Tibial artery (tissue), 4 donors: ENCODE measurements at regions of chr7 and their contacts with region 1.

Region 1: GRCh38 chr7:135558337-135558767 is 635 bp downstream of the NUP205 start:
- DNase-seq: peak; percentile 63 to 73
- H3K4me3 ChIP-seq: peak overlapping the region; percentile 59 to 64
- H3K27ac ChIP-seq: peak overlapping the region; percentile 81 to 86
- H3K4me1 ChIP-seq: peaks cover 0 to 16% (median 6%) of the 10 kb centered on the region in 4 donors
- H3K27me3 ChIP-seq: no peaks in the 10 kb centered on the region
- CTCF ChIP-seq: peak; percentile 41 to 52

Region 2: DNA sequence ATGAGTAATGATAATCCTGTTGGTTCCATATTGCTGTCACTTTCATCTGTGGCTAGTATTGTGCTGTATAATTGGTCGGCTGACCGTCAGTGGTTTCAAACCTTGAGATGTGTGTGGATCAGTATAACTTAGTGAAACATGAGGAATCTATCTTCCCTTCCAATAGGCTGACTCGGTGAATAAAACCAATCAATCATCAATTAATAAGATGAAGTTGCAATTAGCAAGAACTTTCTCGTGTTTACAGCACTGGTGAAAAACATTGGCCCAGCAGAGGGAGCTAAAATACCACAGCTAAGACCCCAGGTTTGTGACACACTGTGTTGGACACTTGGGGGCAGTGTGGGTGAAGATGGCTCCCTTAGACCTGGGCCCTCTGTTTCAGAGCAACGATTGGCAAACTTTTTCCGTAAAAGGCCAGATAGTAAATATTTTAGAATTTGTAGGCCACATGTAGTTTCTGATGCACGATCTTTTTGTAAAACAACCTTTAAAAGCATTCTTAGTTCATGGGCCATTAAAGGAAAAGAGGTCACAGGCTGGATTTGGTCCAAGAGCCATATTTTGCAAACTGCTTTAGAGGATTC is 276.9 kb before region 1 on chr7:
- intact Hi-C with region 1: loop called (anchors 2 kb)
- DNase-seq: peak; percentile 83 to 88
- H3K4me3 ChIP-seq: no peak overlapping the region
- H3K27ac ChIP-seq: no peak overlapping the region
- H3K4me1 ChIP-seq: peaks cover 0 to 9% (median 2%) of the 10 kb centered on the region in 4 donors
- H3K27me3 ChIP-seq: peaks cover 0 to 2% of the 10 kb centered on the region in 2 donors
- CTCF ChIP-seq: peak; percentile 89 to 94

Region 3: DNA sequence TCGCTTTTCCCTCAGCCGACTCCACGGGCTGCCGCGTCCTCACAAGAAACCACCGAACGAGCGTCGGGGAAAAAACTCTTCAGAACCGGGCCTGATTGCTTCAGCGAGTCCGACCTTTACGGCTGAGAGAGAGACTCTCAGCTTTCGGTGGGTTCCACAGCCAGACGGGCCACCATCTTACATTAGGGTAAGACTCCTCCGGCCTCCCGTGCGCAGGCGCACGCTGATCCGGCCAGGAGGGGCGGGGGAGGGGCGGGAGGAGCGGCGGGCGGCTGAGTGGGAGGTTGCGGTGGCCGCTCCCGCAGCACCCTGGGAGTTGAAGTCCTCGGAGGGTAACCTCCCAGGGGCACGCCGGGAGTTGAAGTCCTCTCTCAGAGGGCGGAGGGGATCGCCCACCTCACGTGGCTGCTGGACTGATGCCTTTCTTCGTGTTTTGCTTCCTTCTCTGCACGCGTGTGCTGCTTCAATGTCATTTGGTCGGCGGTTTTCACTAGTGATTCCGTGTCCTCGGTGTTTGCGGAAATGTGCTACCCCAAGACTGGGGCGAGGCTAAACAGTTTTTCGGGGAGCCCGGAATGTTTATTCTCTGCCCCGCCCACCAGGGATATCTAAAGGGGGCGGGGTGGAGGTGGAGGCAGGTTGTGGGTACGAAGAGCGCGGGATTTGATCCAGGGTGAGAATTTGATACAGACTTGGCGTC is 48.3 kb before region 1 on chr7 and contains the start of gene CNOT4:
- intact Hi-C with region 1: loop called (anchors 2 kb)
- DNase-seq: peak; percentile 95 to 98
- H3K4me3 ChIP-seq: peak within 1 kb of the TSS; percentile 87 to 89
- H3K27ac ChIP-seq: peak within 1 kb of the TSS; percentile 94 to 98
- H3K4me1 ChIP-seq: peaks cover 0 to 41% (median 13%) of the 10 kb centered on the region in 4 donors
- H3K27me3 ChIP-seq: no peaks in the 10 kb centered on the region
- CTCF ChIP-seq: no peak